AG04449 (cell line): ENCODE measurements at regions of chr10 and their contacts with region 1.

Region 1: DNA sequence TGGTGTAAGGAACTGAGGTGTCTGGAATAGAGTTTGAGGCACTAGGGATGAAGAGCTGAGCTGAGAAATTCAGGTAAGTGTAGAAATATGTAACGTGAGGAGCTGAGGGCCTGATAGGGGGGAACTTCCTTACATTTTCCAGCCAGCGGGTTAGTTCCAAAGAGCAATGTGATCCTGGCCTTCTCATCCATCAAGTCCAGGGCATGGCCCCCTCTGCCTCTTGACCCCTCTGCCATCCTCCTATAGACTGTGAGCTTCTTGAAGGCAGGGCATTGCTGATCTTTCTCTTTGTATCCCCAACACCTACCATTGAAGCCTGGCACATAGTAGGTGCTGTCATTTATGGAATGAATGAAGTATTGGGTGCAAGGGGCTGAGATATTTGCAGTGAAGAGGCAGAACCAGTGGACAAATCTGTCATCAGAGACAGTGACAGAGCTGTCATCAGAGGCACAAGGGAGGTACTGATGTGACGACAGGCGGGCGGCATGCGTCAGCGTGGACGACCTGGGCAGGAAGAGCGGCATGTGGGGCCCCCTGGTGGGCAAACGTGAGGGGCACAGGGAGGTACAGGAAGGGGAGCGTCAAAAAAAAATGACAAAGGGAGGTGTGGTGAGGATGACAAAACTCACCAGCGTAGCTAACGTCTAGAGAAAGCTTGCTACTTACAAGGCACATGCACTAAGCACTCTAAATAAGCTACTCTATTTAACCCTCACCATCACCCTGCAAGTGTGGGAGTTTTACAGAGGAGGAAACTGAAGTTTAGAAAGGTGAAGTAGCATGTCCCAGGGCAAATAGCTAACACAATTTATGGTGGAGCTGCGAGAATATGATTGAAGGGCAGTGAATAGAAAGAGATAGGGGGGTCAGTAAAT is 5.2 kb upstream of the CAMK2G start:
- DNase-seq: no peak
- H3K4me3 ChIP-seq: no peak overlapping the region
- CTCF ChIP-seq: peak; percentile 96

Region 2: GRCh38 chr10:73730153-73730906 is 149.2 kb before region 1 on chr10:
- CTCF ChIA-PET with region 1: no interaction called
- POLR2A ChIA-PET with region 1: no interaction called
- DNase-seq: no peak
- H3K4me3 ChIP-seq: peak overlapping the region; percentile 94
- CTCF ChIP-seq: no peak

Region 3: GRCh38 chr10:73785221-73785720 is 94.3 kb before region 1 on chr10 and contains the start of gene ZSWIM8:
- CTCF ChIA-PET with region 1: interaction called, 13 read pairs
- POLR2A ChIA-PET with region 1: interaction called, 3 read pairs
- DNase-seq: peak; percentile 79
- H3K4me3 ChIP-seq: peak within 1 kb of the TSS; percentile 89
- CTCF ChIP-seq: no peak

Region 4: DNA sequence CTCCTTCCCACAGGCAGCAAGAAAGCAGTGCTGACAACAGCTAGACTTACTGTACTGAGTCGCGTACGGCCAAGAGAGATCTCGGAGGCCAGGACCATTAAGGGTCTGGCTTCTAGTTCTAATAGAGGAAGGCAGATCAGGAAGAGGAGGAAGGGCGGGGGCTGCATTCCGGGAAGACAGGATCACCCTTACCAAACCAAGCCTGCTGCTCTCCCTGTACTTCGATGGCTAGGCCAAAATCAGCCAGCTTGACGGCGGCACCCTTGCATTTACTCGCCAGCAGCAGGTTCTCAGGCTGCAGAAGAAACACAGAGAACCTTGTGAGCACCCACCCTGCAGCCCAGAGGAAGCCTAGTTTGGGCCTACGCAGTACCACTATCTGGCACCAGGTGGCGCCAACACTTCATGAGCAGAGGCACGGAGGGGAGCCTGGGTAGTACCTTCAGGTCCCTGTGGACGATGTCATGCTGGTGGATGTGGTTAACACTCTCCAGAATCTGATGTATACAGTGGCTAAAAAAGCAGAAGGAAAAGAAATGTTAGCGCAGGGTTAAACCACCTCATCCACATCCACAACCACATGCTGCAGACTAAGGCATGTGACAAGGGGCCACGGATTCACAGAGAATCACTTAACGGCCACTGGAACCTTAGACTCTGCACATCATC is 30.6 kb before region 1 on chr10:
- CTCF ChIA-PET with region 1: interaction called, 518 read pairs
- POLR2A ChIA-PET with region 1: interaction called, 8 read pairs
- DNase-seq: peak; percentile 16
- H3K4me3 ChIP-seq: no peak overlapping the region
- CTCF ChIP-seq: peak; percentile 96

Region 5: GRCh38 chr10:73899423-73899822 is 19.9 kb after region 1 on chr10:
- CTCF ChIA-PET with region 1: interaction called, 109 read pairs
- POLR2A ChIA-PET with region 1: no interaction called
- DNase-seq: no peak
- H3K4me3 ChIP-seq: no peak overlapping the region
- CTCF ChIP-seq: no peak

Region 6: GRCh38 chr10:74081192-74081803 is 201.8 kb after region 1 on chr10:
- CTCF ChIA-PET with region 1: interaction called, 18 read pairs
- POLR2A ChIA-PET with region 1: no interaction called
- DNase-seq: no peak
- H3K4me3 ChIP-seq: no peak overlapping the region
- CTCF ChIP-seq: peak; percentile 71

Region 7: GRCh38 chr10:74165530-74165901 is 286.0 kb after region 1 on chr10:
- CTCF ChIA-PET with region 1: no interaction called
- POLR2A ChIA-PET with region 1: no interaction called
- DNase-seq: no peak
- H3K4me3 ChIP-seq: no peak overlapping the region
- CTCF ChIP-seq: no peak

Region 8: GRCh38 chr10:74502963-74503608 is 623.6 kb after region 1 on chr10:
- CTCF ChIA-PET with region 1: no interaction called
- POLR2A ChIA-PET with region 1: no interaction called
- DNase-seq: peak; percentile 26
- H3K4me3 ChIP-seq: no peak overlapping the region
- CTCF ChIP-seq: no peak

Region 9: DNA sequence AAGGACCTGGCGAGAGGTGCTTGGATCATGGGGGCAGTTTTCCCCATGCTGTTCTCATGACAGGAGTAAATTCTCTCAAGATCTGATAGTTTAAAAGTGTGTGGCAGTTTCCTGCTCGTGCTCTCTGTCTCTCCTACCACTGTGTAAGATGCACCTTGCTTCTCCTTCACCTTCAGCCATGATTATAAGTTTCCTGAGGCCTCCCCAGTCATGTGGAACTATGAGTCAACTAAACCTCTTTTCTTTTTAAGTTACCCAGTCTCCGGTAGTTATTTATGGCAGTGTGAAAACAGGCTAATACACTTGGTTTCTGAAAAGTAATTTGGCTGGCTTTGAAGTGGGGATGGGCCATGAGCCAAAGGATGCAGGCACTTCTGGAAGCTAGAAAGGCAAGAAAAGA is 678.9 kb after region 1 on chr10:
- CTCF ChIA-PET with region 1: no interaction called
- POLR2A ChIA-PET with region 1: no interaction called
- DNase-seq: no peak
- H3K4me3 ChIP-seq: no peak overlapping the region
- CTCF ChIP-seq: no peak